H1 (cell line): ENCODE measurements at regions of chr1 and their contacts with region 1.

Region 1: GRCh38 chr1:32773018-32773763 is 44.0 kb downstream of the YARS1 start:
- DNase-seq: peak; percentile 74 to 92
- H3K4me3 ChIP-seq: no peak overlapping the region
- H3K27ac ChIP-seq: no peak overlapping the region
- H3K4me1 ChIP-seq: peaks cover 0 to 22% (median 9%) of the 10 kb centered on the region in 4 experiments; a peak in 6 of 7 replicates
- H3K27me3 ChIP-seq: no peaks in the 10 kb centered on the region
- CTCF ChIP-seq: peak; percentile 93 to 96 (median 95)
- EP300 ChIP-seq: no peak
- POLR2A ChIP-seq: 0 out of 3 replicates have a peak, but pooled peaks of 1 of the 2 experiments have one; percentile 57
- RAD21 ChIP-seq: peak; percentile 93 to 94

Region 2: GRCh38 chr1:32650752-32651460 is 122.3 kb before region 1 on chr1 and contains the start of gene RBBP4:
- CTCF ChIA-PET with region 1: no interaction called
- POLR2A ChIA-PET with region 1: interaction called, 11 read pairs
- DNase-seq: peak; percentile 94 to 99
- H3K4me3 ChIP-seq: peak within 1 kb of the TSS; percentile 99
- H3K27ac ChIP-seq: peak within 1 kb of the TSS; percentile 99
- H3K4me1 ChIP-seq: peaks cover 0 to 5% (median 1%) of the 10 kb centered on the region in 4 experiments; a peak in 4 of 7 replicates
- H3K27me3 ChIP-seq: no peaks in the 10 kb centered on the region
- CTCF ChIP-seq: no peak
- EP300 ChIP-seq: no peak
- POLR2A ChIP-seq: no peak; a peak in 1 of 3 replicates
- RAD21 ChIP-seq: no peak
- total RNA-seq, gene RBBP4: 397 and 402 TPM in 2 replicates

Region 3: DNA sequence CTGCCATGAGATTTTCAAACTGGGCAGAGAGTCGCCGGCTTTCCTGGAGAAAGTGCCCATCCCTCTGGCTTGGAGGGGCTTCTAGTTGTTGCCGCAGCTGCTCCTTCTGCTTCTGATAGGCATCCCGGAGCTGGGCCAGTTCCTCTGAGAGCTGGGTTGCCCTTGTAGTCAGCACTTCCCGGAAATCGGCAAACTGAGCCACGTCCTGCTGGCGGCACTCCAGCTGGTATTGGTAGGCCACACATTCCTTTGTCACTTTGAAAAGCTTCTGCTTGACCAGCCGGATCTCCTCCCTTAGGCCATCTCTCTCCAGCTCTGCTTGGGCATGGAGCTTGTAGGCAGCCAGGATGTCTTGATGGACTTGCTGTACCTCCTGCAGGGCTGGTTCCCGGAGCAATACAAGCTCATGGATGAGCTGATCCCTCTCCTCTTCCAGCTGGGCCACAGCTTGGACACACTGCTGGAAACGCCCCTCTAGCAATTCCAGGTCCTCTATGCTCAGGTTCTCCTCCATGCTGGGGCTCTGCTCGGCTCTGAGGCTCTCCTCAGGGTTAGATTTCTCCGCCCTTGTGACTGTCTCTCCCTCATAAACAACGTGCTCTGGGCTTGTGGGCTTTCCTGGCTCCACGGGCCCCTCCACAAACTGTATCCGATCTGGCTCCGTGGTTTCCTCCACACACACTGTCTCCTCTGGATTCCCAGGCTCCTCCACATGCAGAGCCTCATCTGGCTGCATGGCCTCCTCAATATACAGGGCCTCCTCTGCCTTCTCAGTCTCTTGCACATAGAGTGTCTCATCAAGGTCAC is 77.9 kb before region 1 on chr1:
- CTCF ChIA-PET with region 1: interaction called, 13 read pairs
- POLR2A ChIA-PET with region 1: interaction called, 15 read pairs
- DNase-seq: no peak
- H3K4me3 ChIP-seq: no peak overlapping the region
- H3K27ac ChIP-seq: no peak overlapping the region
- H3K4me1 ChIP-seq: no peaks in the 10 kb centered on the region
- H3K27me3 ChIP-seq: no peaks in the 10 kb centered on the region
- CTCF ChIP-seq: no peak
- EP300 ChIP-seq: no peak
- POLR2A ChIP-seq: no peak
- RAD21 ChIP-seq: no peak

Region 4: GRCh38 chr1:32724678-32725614 is 48.2 kb before region 1 on chr1:
- CTCF ChIA-PET with region 1: interaction called, 55 read pairs
- POLR2A ChIA-PET with region 1: interaction called, 152 read pairs
- DNase-seq: peak in 1 of 2 experiments; percentile 56
- H3K4me3 ChIP-seq: no peak overlapping the region
- H3K27ac ChIP-seq: peak overlapping the region; percentile 49; the same call in 1 of the 2 replicates
- H3K4me1 ChIP-seq: peaks cover 3 to 13% (median 13%) of the 10 kb centered on the region in 4 experiments
- H3K27me3 ChIP-seq: no peaks in the 10 kb centered on the region; a peak in 1 of 7 replicates
- CTCF ChIP-seq: no peak
- EP300 ChIP-seq: no peak
- POLR2A ChIP-seq: 0 out of 3 replicates have a peak, but pooled peaks of 1 of the 2 experiments have one; percentile 23
- RAD21 ChIP-seq: no peak

Region 5: DNA sequence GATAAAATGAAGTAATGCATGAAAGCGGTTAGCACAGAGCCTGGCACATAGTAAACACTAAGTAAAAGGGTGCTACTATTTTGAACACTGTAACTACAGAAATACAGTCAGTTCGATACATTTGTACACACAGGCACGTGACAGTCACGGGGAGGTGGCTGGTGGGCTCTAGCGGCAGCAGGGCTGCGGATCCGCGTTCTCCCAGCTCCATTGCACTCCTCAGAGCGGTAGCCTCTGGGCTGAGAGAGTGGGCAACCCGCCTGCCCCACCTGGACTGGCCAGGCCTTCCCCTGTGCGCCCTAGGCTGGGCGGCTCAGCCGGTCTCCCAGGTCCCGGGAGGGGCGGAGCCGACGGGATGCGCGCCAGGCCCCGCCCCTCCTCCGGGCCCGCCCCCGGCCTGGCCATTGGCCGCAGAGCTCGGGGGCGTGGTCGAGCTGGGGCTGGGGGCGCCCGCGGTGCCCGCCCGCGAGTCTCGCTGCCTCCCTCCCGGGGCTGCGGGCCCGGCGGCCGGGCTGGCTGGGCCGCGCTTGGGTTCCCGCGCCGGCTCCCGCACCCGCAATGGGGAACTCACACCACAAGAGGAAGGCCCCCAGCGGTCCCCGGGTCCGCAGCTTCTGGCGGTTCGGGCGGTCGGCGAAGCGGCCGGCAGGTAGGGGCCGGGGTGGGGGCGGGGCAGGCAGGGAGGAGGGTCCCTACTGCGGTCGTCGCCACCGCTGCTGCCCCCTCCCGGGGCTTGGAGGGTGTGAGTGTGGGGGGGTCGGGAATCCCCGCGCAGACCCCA is 19.5 kb before region 1 on chr1:
- CTCF ChIA-PET with region 1: interaction called, 220 read pairs
- POLR2A ChIA-PET with region 1: interaction called, 295 read pairs
- DNase-seq: peak; percentile 59 to 91
- H3K4me3 ChIP-seq: peak overlapping the region; percentile 79 to 100 (median 94)
- H3K27ac ChIP-seq: peak overlapping the region; percentile 92
- H3K4me1 ChIP-seq: peaks cover 16 to 37% (median 22%) of the 10 kb centered on the region in 4 experiments
- H3K27me3 ChIP-seq: no peaks in the 10 kb centered on the region
- CTCF ChIP-seq: peak in 1 of 3 experiments; percentile 26; a peak in 1 of 4 replicates
- EP300 ChIP-seq: no peak
- POLR2A ChIP-seq: peak in 1 of 2 experiments; percentile 70; a peak in 2 of 3 replicates
- RAD21 ChIP-seq: peak; percentile 3 to 15; a peak in 2 of 4 replicates

Region 6: GRCh38 chr1:32791881-32792280 is 18.7 kb after region 1 on chr1:
- CTCF ChIA-PET with region 1: interaction called, 12 read pairs
- POLR2A ChIA-PET with region 1: interaction called, 36 read pairs
- DNase-seq: no peak
- H3K4me3 ChIP-seq: no peak overlapping the region
- H3K27ac ChIP-seq: no peak overlapping the region
- H3K4me1 ChIP-seq: no peaks in the 10 kb centered on the region
- H3K27me3 ChIP-seq: no peaks in the 10 kb centered on the region
- CTCF ChIP-seq: no peak
- EP300 ChIP-seq: no peak
- POLR2A ChIP-seq: no peak
- RAD21 ChIP-seq: no peak

Region 7: GRCh38 chr1:32925403-32926162 is 152.4 kb after region 1 on chr1:
- CTCF ChIA-PET with region 1: no interaction called
- POLR2A ChIA-PET with region 1: no interaction called
- DNase-seq: peak; percentile 21 to 61
- H3K4me3 ChIP-seq: peak overlapping the region; percentile 44 to 58 (median 54); a peak in 7 of 8 replicates
- H3K27ac ChIP-seq: no peak overlapping the region
- H3K4me1 ChIP-seq: peaks cover 0 to 4% (median 2%) of the 10 kb centered on the region in 4 experiments; a peak in 5 of 7 replicates
- H3K27me3 ChIP-seq: peaks cover 12 to 52% (median 49%) of the 10 kb centered on the region in 4 experiments
- CTCF ChIP-seq: peak in 2 of 3 experiments; percentile 18 to 28; a peak in 3 of 4 replicates
- EP300 ChIP-seq: no peak
- POLR2A ChIP-seq: no peak
- RAD21 ChIP-seq: peak; percentile 9 to 49; a peak in 2 of 4 replicates

Region 8: GRCh38 chr1:32939655-32940371 is 166.6 kb after region 1 on chr1:
- CTCF ChIA-PET with region 1: no interaction called
- POLR2A ChIA-PET with region 1: no interaction called
- DNase-seq: no peak
- H3K4me3 ChIP-seq: no peak overlapping the region
- H3K27ac ChIP-seq: no peak overlapping the region
- H3K4me1 ChIP-seq: no peaks in the 10 kb centered on the region
- H3K27me3 ChIP-seq: no peaks in the 10 kb centered on the region
- CTCF ChIP-seq: no peak
- EP300 ChIP-seq: no peak
- POLR2A ChIP-seq: no peak
- RAD21 ChIP-seq: no peak